Right cardiac atrium (tissue), 5 donors: ENCODE measurements at regions of chr2 and their contacts with region 1.

Region 1: GRCh38 chr2:48107326-48107925 is 201.1 kb upstream of the FBXO11 start:
- DNase-seq: no peak
- ATAC-seq: no peak
- H3K4me3 ChIP-seq: no peak overlapping the region
- H3K27ac ChIP-seq: peak overlapping the region; percentile 4
- H3K4me1 ChIP-seq: peaks cover 7% of the 10 kb centered on the region
- H3K27me3 ChIP-seq: no peaks in the 10 kb centered on the region

Region 2: DNA sequence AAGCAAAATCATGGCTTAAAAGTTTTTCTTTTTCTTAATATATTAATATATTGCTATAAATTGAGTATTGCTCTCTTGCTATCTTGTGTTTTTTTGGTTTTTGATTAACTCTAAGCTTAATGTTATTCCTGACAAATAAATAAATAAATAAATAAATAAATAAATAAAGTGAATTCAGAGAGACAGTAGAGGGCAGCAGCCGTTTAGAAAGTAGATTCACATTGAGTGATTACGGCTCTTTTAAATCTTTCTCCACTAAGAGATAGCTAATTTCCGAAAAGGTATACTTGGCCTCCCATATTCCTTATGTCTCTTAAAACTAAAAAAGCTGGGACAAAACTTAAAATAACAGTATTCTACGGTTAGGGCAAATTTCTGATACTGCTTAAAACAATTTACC is 670.1 kb before region 1 on chr2:
- intact Hi-C with region 1: loop called in 1 of 4 experiments (anchors 10 kb)
- DNase-seq: no peak
- ATAC-seq: peak in 1 of 2 donors; percentile 42
- H3K4me3 ChIP-seq: no peak overlapping the region
- H3K27ac ChIP-seq: no peak overlapping the region
- H3K4me1 ChIP-seq: no peaks in the 10 kb centered on the region
- H3K27me3 ChIP-seq: no peaks in the 10 kb centered on the region

Region 3: GRCh38 chr2:47782671-47783485 is 324.5 kb before region 1 on chr2 and contains the start of gene MSH6:
- intact Hi-C with region 1: loop called in 1 of 4 experiments (anchors 10 kb)
- DNase-seq: peak; percentile 89 to 96 (median 95)
- ATAC-seq: peak; percentile 98
- H3K4me3 ChIP-seq: peak within 1 kb of the TSS; percentile 88
- H3K27ac ChIP-seq: peak within 1 kb of the TSS; percentile 89
- H3K4me1 ChIP-seq: no peaks in the 10 kb centered on the region
- H3K27me3 ChIP-seq: no peaks in the 10 kb centered on the region
- total RNA-seq, gene MSH6: 22.1 to 26.1 (median 25.2) TPM

Region 4: GRCh38 chr2:47850198-47850597 is 257.2 kb before region 1 on chr2:
- intact Hi-C with region 1: loop called in 3 of 4 experiments (anchors 5 to 10 kb)
- DNase-seq: no peak
- ATAC-seq: no peak
- H3K4me3 ChIP-seq: no peak overlapping the region
- H3K27ac ChIP-seq: no peak overlapping the region
- H3K4me1 ChIP-seq: peaks cover 5% of the 10 kb centered on the region
- H3K27me3 ChIP-seq: no peaks in the 10 kb centered on the region

Region 5: GRCh38 chr2:47906157-47907038 is 201.0 kb before region 1 on chr2 and contains the start of gene FBXO11:
- intact Hi-C with region 1: loop called in 2 of 4 experiments (anchors 2 to 5 kb)
- DNase-seq: peak; percentile 97 to 98 (median 98)
- ATAC-seq: peak; percentile 97 to 98
- H3K4me3 ChIP-seq: peak within 1 kb of the TSS; percentile 92
- H3K27ac ChIP-seq: peak within 1 kb of the TSS; percentile 98
- H3K4me1 ChIP-seq: peaks cover 2% of the 10 kb centered on the region
- H3K27me3 ChIP-seq: no peaks in the 10 kb centered on the region
- total RNA-seq, gene FBXO11: 39.1 to 45.4 (median 42.1) TPM

Region 6: GRCh38 chr2:48589170-48589767 is 481.8 kb after region 1 on chr2:
- intact Hi-C with region 1: loop called in 1 of 4 experiments (anchors 10 kb)
- DNase-seq: peak in 1 of 3 donors; percentile 65
- ATAC-seq: no peak
- H3K4me3 ChIP-seq: no peak overlapping the region
- H3K27ac ChIP-seq: no peak overlapping the region
- H3K4me1 ChIP-seq: no peaks in the 10 kb centered on the region
- H3K27me3 ChIP-seq: no peaks in the 10 kb centered on the region